ENCODE measurements at regions of chr5 and their contacts with region 1.

Region 1: DNA sequence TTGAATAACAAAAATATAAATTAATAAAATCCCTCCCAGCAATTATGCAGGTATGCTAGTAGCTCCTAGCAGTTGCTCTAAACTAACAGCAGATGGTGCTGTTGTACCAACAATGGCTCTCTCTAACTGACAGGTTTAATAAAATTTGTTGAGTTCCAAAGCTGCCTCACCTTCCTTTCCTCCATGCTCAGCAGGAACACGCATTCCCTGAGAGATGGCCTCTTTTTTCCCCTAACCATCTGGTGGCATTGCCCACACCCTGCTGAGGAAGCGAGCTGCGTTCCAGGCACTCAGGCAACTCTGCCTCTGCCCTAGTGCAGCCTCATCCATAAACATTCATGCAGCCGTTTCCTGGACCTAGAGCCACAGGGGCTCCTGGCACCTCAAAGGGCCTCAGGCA is 106.2 kb downstream of the KLHL3 start:
- DNase-seq: peak; percentile 82
- CTCF ChIP-seq: peak; percentile 72

Region 2: DNA sequence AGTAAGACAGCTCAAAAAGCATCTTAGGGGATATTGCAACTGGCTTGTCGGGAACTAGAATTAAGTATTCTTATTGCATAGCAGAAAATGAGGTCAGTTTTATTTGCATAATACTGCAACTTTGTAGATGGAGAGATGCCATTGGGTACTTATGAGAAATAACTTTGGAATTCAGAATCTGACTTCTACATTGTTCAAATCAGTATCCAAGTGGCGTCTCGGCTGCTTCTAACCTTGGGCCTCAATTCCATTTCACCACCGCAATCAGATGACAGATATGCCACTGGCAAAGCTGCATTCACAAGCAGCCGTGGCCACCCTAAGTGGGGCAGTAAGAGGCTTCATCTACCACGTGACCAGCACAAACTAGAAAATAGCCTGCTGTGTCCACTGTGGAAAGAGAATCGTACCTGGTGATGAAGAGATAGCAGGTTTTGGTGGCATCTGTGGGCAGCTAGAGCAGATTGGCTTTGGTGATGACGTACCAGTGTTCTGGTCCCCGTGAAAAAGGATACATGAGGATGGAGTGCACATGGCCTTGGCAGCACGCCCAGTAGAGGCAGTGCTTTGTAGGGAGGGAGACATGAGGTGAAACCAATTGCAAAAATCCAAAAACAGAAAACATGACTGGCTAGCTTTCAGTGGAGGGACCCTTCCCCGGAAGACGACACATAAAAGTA is 10.3 kb before region 1 on chr5:
- CTCF ChIA-PET with region 1: interaction called, 43 read pairs
- POLR2A ChIA-PET with region 1: no interaction called
- DNase-seq: no peak
- CTCF ChIP-seq: no peak

Region 3: GRCh38 chr5:137641148-137641547 is 11.5 kb after region 1 on chr5:
- CTCF ChIA-PET with region 1: interaction called, 46 read pairs
- POLR2A ChIA-PET with region 1: no interaction called
- DNase-seq: no peak
- CTCF ChIP-seq: no peak

Region 4: GRCh38 chr5:137718611-137719010 is 89.0 kb after region 1 on chr5:
- CTCF ChIA-PET with region 1: interaction called, 10 read pairs
- POLR2A ChIA-PET with region 1: no interaction called
- DNase-seq: no peak
- CTCF ChIP-seq: no peak

Region 5: GRCh38 chr5:137735555-137736284 is 106.1 kb after region 1 on chr5 and contains the start of gene KLHL3:
- CTCF ChIA-PET with region 1: interaction called, 148 read pairs
- POLR2A ChIA-PET with region 1: no interaction called
- DNase-seq: peak; percentile 58
- CTCF ChIP-seq: peak; percentile 36

Region 6: GRCh38 chr5:137792303-137792702 is 162.7 kb after region 1 on chr5:
- CTCF ChIA-PET with region 1: no interaction called
- POLR2A ChIA-PET with region 1: no interaction called
- DNase-seq: no peak
- CTCF ChIP-seq: no peak

Region 7: DNA sequence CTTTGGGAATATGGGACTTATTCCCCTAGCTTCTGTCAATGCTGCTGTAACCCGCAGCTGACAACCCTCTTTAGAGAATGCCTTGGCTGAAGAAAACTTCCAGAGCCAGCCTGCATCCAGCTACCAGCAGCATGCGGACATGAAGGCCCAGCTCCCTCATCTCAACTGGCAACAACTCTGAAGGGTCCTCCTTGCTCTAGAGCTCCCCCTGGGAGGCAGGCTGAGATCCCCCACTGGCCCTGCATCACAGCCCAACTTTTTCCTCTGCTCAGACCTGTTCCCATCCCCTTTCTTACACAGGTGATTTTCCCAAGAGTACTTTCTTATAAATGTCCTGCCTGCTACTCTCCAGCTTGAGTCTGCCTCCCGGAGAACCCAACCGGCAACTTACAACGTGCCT is 435.5 kb after region 1 on chr5:
- CTCF ChIA-PET with region 1: interaction called, 24 read pairs
- POLR2A ChIA-PET with region 1: no interaction called
- DNase-seq: no peak
- CTCF ChIP-seq: no peak

Measured in GM10248 (cell line).